Mammary epithelial cell (primary cell): ENCODE measurements at regions of chr11 and their contacts with region 1.

Region 1: GRCh38 chr11:67507864-67508485 is at the start of gene CDK2AP2:
- DNase-seq: peak; percentile 100
- H3K4me3 ChIP-seq: peak within 1 kb of the TSS; percentile 60 to 98 (median 71)
- H3K27ac ChIP-seq: peak within 1 kb of the TSS; percentile 83
- H3K4me1 ChIP-seq: peaks cover 37% of the 10 kb centered on the region
- H3K27me3 ChIP-seq: no peaks in the 10 kb centered on the region
- CTCF ChIP-seq: no peak
- total RNA-seq, gene CDK2AP2: 19.2 to 45.9 TPM

Region 2: GRCh38 chr11:67053896-67054842 is 453.8 kb before region 1 on chr11:
- CTCF ChIA-PET with region 1: no interaction called
- dilution Hi-C with region 1: no loop called
- in situ Hi-C with region 1: no loop called
- intact Hi-C with region 1: loop called (anchors 10 kb)
- DNase-seq: peak; percentile 57
- H3K4me3 ChIP-seq: no peak overlapping the region
- H3K27ac ChIP-seq: peak overlapping the region; percentile 99
- H3K4me1 ChIP-seq: peaks cover 42% of the 10 kb centered on the region
- H3K27me3 ChIP-seq: no peaks in the 10 kb centered on the region
- CTCF ChIP-seq: peak; percentile 89 to 95

Region 3: GRCh38 chr11:67265633-67266423 is 242.1 kb before region 1 on chr11:
- CTCF ChIA-PET with region 1: no interaction called
- dilution Hi-C with region 1: no loop called
- in situ Hi-C with region 1: no loop called
- intact Hi-C with region 1: loop called (anchors 5 kb)
- DNase-seq: peak; percentile 46
- H3K4me3 ChIP-seq: peak overlapping the region in 2 of 3 experiments; percentile 20 to 33
- H3K27ac ChIP-seq: no peak overlapping the region
- H3K4me1 ChIP-seq: peaks cover 62% of the 10 kb centered on the region
- H3K27me3 ChIP-seq: no peaks in the 10 kb centered on the region
- CTCF ChIP-seq: peak; percentile 36 to 65

Region 4: GRCh38 chr11:67391304-67392132 is 116.5 kb before region 1 on chr11 and contains the start of gene RAD9A:
- CTCF ChIA-PET with region 1: no interaction called
- dilution Hi-C with region 1: no loop called
- in situ Hi-C with region 1: no loop called
- intact Hi-C with region 1: loop called (anchors 1 kb)
- DNase-seq: peak; percentile 89
- H3K4me3 ChIP-seq: peak within 1 kb of the TSS; percentile 74 to 78 (median 77)
- H3K27ac ChIP-seq: peak within 1 kb of the TSS; percentile 75
- H3K4me1 ChIP-seq: peaks cover 6% of the 10 kb centered on the region
- H3K27me3 ChIP-seq: no peaks in the 10 kb centered on the region
- CTCF ChIP-seq: no peak
- total RNA-seq, gene RAD9A: 6.5 to 17.2 TPM

Region 5: DNA sequence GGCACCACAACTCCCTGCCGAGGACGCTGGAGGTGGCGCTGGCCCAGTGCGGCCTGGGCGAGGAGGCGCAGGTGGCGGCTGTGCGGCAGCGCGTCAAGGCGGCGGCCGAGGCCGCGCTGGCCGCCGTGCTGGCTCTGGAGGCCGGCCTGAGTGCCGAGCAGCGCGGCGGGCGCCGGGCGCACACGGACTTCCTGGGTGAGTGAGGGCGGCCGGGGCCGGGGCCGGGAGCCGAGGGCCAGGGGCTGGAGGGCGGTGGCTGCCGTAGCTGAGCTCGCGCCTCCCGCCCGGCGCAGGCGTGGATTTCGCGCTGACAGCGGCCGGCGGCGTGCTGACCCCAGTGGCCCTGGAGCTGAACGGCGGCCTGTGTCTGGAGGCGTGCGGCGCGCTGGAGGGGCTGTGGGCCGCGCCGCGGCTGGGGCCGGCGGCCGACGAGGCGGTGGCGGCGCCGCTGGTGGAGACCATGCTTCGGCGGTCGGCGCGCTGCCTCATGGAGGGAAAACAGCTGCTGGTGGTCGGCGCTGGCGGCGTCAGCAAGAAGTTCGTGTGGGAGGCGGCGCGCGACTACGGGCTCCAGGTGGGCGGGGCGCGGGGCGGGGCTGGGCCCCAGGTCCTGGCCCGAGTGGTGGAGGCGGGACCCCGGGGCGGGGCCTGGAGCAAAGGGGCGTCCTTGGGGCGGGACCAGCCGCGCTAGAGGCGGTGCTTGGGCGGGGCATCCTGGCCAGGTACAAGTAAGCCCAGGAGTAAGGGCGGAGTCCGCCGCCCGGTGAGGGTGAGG is 87.1 kb before region 1 on chr11:
- CTCF ChIA-PET with region 1: interaction called, 3 read pairs
- dilution Hi-C with region 1: no loop called
- in situ Hi-C with region 1: no loop called
- intact Hi-C with region 1: loop called (anchors 1 kb)
- DNase-seq: peak; percentile 91
- H3K4me3 ChIP-seq: peak overlapping the region; percentile 26 to 63 (median 53)
- H3K27ac ChIP-seq: no peak overlapping the region
- H3K4me1 ChIP-seq: peaks cover 32% of the 10 kb centered on the region
- H3K27me3 ChIP-seq: no peaks in the 10 kb centered on the region
- CTCF ChIP-seq: no peak

Region 6: DNA sequence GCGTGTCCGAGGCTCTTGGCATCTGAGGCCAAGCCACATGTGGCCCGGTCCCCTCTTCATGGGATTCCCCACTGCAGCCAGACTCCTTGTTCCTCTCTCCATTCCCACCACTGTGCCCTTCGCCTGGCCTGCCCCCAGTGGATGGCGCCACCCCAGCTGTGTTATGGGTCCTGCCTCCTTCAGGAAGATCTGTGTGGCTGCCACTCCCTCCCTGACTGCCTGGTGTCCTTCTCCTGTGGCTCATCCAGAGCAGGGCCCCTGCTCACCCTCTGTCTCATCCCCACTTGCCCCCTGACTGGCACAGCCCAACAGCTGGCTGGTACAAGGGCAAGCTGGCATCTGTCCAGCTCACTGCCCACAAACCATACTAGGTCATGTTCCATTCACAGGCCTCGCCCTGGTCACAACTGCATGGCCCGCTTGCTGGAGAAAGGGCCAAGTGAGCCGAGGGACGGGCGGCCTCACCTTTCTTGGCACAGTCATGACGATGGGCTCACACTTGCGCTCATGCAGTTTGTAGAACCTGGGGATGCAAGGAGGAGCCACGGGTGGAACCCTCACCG is 68.6 kb before region 1 on chr11:
- CTCF ChIA-PET with region 1: interaction called, 3 read pairs
- dilution Hi-C with region 1: no loop called
- in situ Hi-C with region 1: no loop called
- intact Hi-C with region 1: loop called (anchors 1 kb)
- DNase-seq: no peak
- H3K4me3 ChIP-seq: no peak overlapping the region
- H3K27ac ChIP-seq: no peak overlapping the region
- H3K4me1 ChIP-seq: peaks cover 9% of the 10 kb centered on the region
- H3K27me3 ChIP-seq: no peaks in the 10 kb centered on the region
- CTCF ChIP-seq: peak; percentile 27 to 49

Region 7: DNA sequence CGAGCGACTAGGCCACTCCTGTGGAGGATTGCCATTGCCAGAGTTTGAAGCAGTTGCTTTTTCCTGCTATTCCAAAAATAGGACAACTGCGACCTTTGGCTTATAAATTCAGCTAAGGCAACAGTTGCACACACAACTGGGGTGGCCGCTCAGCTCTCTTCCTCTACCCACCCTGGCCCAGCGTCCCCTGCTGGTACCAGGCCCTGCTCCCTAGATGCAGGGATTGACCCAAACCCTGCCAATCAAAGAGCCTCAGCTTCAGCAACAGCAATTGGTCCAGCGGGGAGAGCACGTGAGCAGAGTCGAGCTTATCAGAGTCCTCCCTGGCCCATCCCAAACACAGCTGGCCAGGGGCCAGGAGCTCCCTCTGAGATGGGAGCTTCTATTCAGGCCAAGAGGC is 37.3 kb after region 1 on chr11:
- CTCF ChIA-PET with region 1: no interaction called
- dilution Hi-C with region 1: no loop called
- in situ Hi-C with region 1: no loop called
- intact Hi-C with region 1: no loop called
- DNase-seq: no peak
- H3K4me3 ChIP-seq: no peak overlapping the region
- H3K27ac ChIP-seq: no peak overlapping the region
- H3K4me1 ChIP-seq: no peaks in the 10 kb centered on the region
- H3K27me3 ChIP-seq: no peaks in the 10 kb centered on the region
- CTCF ChIP-seq: no peak

Region 8: GRCh38 chr11:67583247-67584204 is 75.6 kb after region 1 on chr11 and contains the start of gene GSTP1:
- CTCF ChIA-PET with region 1: no interaction called
- dilution Hi-C with region 1: no loop called
- in situ Hi-C with region 1: no loop called
- intact Hi-C with region 1: loop called (anchors 2 kb)
- DNase-seq: peak; percentile 84
- H3K4me3 ChIP-seq: peak within 1 kb of the TSS; percentile 85 to 91 (median 89)
- H3K27ac ChIP-seq: peak within 1 kb of the TSS; percentile 93
- H3K4me1 ChIP-seq: peaks cover 20% of the 10 kb centered on the region
- H3K27me3 ChIP-seq: no peaks in the 10 kb centered on the region
- CTCF ChIP-seq: peak; percentile 28 to 53
- total RNA-seq, gene GSTP1: 1,123 to 1,562 TPM

Region 9: DNA sequence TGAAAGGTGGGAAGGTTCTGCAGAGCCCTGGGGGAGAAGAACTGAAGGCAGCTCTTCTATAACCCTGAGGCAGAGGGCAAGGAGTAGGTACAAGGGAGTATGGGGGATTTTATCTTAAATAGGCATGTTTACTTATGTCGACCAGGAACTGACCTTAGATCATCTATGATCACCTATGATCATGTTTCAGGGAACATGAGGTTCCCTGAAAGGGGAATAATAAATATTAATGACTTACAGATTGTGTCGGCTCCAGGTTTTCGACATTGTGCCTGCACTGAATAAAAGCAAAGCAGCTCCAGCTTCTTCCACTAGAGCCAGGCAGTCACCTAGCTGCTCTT is 85.6 kb after region 1 on chr11:
- CTCF ChIA-PET with region 1: no interaction called
- dilution Hi-C with region 1: no loop called
- in situ Hi-C with region 1: no loop called
- intact Hi-C with region 1: no loop called
- DNase-seq: no peak
- H3K4me3 ChIP-seq: no peak overlapping the region
- H3K27ac ChIP-seq: no peak overlapping the region
- H3K4me1 ChIP-seq: peaks cover 14% of the 10 kb centered on the region
- H3K27me3 ChIP-seq: no peaks in the 10 kb centered on the region
- CTCF ChIP-seq: no peak